ENCODE measurements at regions of chr2 and their contacts with region 1.

Region 1: GRCh38 chr2:40244675-40245074 is 207.2 kb downstream of the SLC8A1 start:
- DNase-seq: peak; percentile 75
- H3K4me3 ChIP-seq: no peak overlapping the region
- H3K27ac ChIP-seq: no peak overlapping the region
- H3K4me1 ChIP-seq: peaks cover 30% of the 10 kb centered on the region
- CTCF ChIP-seq: peak; percentile 88

Region 2: GRCh38 chr2:40028792-40029488 is 215.7 kb before region 1 on chr2:
- CTCF ChIA-PET with region 1: no interaction called
- POLR2A ChIA-PET with region 1: no interaction called
- intact Hi-C with region 1: loop called (anchors 5 kb)
- DNase-seq: peak; percentile 82
- H3K4me3 ChIP-seq: peak overlapping the region; percentile 15
- H3K27ac ChIP-seq: peak overlapping the region; percentile 81
- H3K4me1 ChIP-seq: peaks cover 26% of the 10 kb centered on the region
- CTCF ChIP-seq: no peak

Region 3: GRCh38 chr2:40273734-40274182 is 29.1 kb after region 1 on chr2:
- CTCF ChIA-PET with region 1: no interaction called
- POLR2A ChIA-PET with region 1: no interaction called
- intact Hi-C with region 1: no loop called
- DNase-seq: no peak
- H3K4me3 ChIP-seq: no peak overlapping the region
- H3K27ac ChIP-seq: no peak overlapping the region
- H3K4me1 ChIP-seq: peaks cover 43% of the 10 kb centered on the region
- CTCF ChIP-seq: no peak

Region 4: GRCh38 chr2:40448468-40449079 is 203.9 kb after region 1 on chr2:
- CTCF ChIA-PET with region 1: no interaction called
- POLR2A ChIA-PET with region 1: interaction called, 4 read pairs
- intact Hi-C with region 1: loop called (anchors 2 kb)
- DNase-seq: peak; percentile 68
- H3K4me3 ChIP-seq: no peak overlapping the region
- H3K27ac ChIP-seq: no peak overlapping the region
- H3K4me1 ChIP-seq: peaks cover 45% of the 10 kb centered on the region
- CTCF ChIP-seq: peak; percentile 88

Region 5: DNA sequence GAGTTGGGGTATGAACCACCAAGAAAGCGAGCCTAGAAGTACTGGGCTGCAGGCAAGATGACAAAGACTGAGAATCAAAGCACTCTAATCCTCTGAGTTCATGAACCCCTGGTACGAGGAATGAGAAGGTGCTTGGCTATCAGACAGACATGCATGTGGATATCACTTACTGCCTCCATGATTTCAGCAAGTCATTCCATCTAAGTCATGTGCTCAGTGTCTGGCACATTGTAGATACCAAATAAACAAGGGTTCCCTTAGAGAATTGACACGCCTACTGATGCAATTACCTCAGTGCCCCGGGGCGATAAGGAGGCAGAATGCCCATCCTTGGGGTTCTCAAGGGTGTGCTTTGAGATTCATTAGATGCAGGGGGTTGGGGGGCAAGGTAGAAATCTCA is 1677.5 kb after region 1 on chr2:
- CTCF ChIA-PET with region 1: no interaction called
- POLR2A ChIA-PET with region 1: no interaction called
- intact Hi-C with region 1: no loop called
- DNase-seq: no peak
- H3K4me3 ChIP-seq: no peak overlapping the region
- H3K27ac ChIP-seq: no peak overlapping the region
- H3K4me1 ChIP-seq: no peaks in the 10 kb centered on the region
- CTCF ChIP-seq: no peak